ENCODE measurements at regions of chr3 and their contacts with region 1.

Region 1: DNA sequence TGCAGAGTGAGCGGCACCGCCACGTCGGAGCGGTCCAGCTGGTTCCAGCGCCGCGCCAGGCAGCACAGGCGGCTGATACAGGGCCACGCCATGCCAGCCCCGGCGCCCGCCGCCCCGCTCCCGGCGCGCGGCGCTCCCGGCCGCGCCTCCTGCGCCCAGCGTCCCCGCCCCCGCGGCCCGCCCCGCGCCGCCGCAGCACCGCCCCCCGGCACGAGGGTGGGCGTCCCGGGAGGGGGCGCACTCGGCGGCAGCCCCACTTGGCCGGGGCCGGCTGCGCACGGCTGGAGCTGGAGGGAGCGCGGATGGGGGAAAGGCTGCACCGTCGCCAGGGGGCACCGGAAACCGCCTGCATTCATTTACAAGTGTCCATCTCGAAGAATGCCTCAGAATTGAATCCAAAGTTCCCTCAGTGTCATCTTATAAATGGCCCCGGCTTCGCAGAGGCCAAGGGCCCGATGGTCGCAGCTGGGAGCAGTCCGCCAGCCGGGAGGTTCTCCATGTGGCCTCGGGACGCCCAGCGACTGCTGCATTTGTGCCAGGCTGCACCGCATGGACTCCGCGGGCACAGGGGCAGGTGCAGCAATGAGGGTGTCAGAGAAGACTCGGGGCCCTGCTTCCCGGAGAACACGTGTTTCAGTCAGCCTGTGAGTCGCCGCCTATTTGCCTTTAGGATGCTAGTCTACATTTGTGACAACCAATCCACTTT is at the start of gene MAP6D1:
- DNase-seq: peak; percentile 16 to 56 (median 32)
- ATAC-seq: peak; percentile 79
- H3K4me3 ChIP-seq: peak within 1 kb of the TSS; percentile 56
- H3K4me3 Mint-ChIP-seq: peak within 1 kb of the TSS; percentile 77 to 90 (median 82)
- H3K27ac ChIP-seq: peak within 1 kb of the TSS; percentile 55
- H3K27ac Mint-ChIP-seq: peak within 1 kb of the TSS in 8 of 9 donors; percentile 36 to 77 (median 70)
- H3K4me1 ChIP-seq: peaks cover 7 to 11% of the 10 kb centered on the region in 2 donors
- H3K4me1 Mint-ChIP-seq: peaks cover 5 to 15% (median 14%) of the 10 kb centered on the region in 7 donors
- H3K27me3 ChIP-seq: no peaks in the 10 kb centered on the region
- H3K27me3 Mint-ChIP-seq: peaks cover 0 to 22% (median 0%) of the 10 kb centered on the region in 5 donors
- total RNA-seq, gene MAP6D1: 0.81 to 2.9 (median 1.2) TPM

Region 2: GRCh38 chr3:183839751-183840150 is 14.1 kb after region 1 on chr3:
- CTCF ChIA-PET with region 1: no interaction called
- POLR2A ChIA-PET with region 1: no interaction called
- intact Hi-C with region 1: loop called in 1 of 2 experiments (anchors 1 kb)
- DNase-seq: no peak
- ATAC-seq: no peak
- H3K4me3 ChIP-seq: no peak overlapping the region
- H3K4me3 Mint-ChIP-seq: no peak overlapping the region
- H3K27ac ChIP-seq: no peak overlapping the region
- H3K27ac Mint-ChIP-seq: no peak overlapping the region
- H3K4me1 ChIP-seq: no peaks in the 10 kb centered on the region
- H3K4me1 Mint-ChIP-seq: peaks cover 0 to 4% (median 0%) of the 10 kb centered on the region in 7 donors
- H3K27me3 ChIP-seq: no peaks in the 10 kb centered on the region
- H3K27me3 Mint-ChIP-seq: no peaks in the 10 kb centered on the region

Region 3: GRCh38 chr3:183975981-183976662 is 150.5 kb after region 1 on chr3:
- CTCF ChIA-PET with region 1: no interaction called
- POLR2A ChIA-PET with region 1: no interaction called
- intact Hi-C with region 1: no loop called
- DNase-seq: no peak
- ATAC-seq: no peak
- H3K4me3 ChIP-seq: no peak overlapping the region
- H3K4me3 Mint-ChIP-seq: no peak overlapping the region
- H3K27ac ChIP-seq: no peak overlapping the region
- H3K27ac Mint-ChIP-seq: no peak overlapping the region
- H3K4me1 ChIP-seq: no peaks in the 10 kb centered on the region
- H3K4me1 Mint-ChIP-seq: peaks cover 0 to 2% (median 0%) of the 10 kb centered on the region in 7 donors
- H3K27me3 ChIP-seq: no peaks in the 10 kb centered on the region
- H3K27me3 Mint-ChIP-seq: no peaks in the 10 kb centered on the region